ENCODE measurements at regions of chr16 and their contacts with region 1.

Region 1: GRCh38 chr16:67660564-67661028 is at the start of gene PARD6A:
- DNase-seq: peak; percentile 94 to 97 (median 97)
- H3K4me3 ChIP-seq: peak within 1 kb of the TSS; percentile 90
- H3K27ac ChIP-seq: peak within 1 kb of the TSS; percentile 82 to 88
- H3K4me1 ChIP-seq: peaks cover 5% of the 10 kb centered on the region
- H3K27me3 ChIP-seq: no peaks in the 10 kb centered on the region
- CTCF ChIP-seq: no peak
- EP300 ChIP-seq: peak; percentile 81
- POLR2A ChIP-seq: no peak
- total RNA-seq, gene PARD6A: 2.7 to 12.9 (median 5.1) TPM

Region 2: GRCh38 chr16:67226804-67227557 is 433.6 kb before region 1 on chr16 and contains the start of gene TMEM208:
- intact Hi-C with region 1: loop called in 1 of 4 experiments (anchors 5 kb)
- DNase-seq: peak; percentile 96 to 98 (median 98)
- H3K4me3 ChIP-seq: peak within 1 kb of the TSS; percentile 92
- H3K27ac ChIP-seq: peak within 1 kb of the TSS; percentile 30 to 76
- H3K4me1 ChIP-seq: peaks cover 10% of the 10 kb centered on the region
- H3K27me3 ChIP-seq: no peaks in the 10 kb centered on the region
- CTCF ChIP-seq: peak in 1 of 3 donors; percentile 34
- EP300 ChIP-seq: peak; percentile 43
- POLR2A ChIP-seq: peak; percentile 88
- total RNA-seq, gene TMEM208: 23.8 to 39.2 (median 32.1) TPM

Region 3: DNA sequence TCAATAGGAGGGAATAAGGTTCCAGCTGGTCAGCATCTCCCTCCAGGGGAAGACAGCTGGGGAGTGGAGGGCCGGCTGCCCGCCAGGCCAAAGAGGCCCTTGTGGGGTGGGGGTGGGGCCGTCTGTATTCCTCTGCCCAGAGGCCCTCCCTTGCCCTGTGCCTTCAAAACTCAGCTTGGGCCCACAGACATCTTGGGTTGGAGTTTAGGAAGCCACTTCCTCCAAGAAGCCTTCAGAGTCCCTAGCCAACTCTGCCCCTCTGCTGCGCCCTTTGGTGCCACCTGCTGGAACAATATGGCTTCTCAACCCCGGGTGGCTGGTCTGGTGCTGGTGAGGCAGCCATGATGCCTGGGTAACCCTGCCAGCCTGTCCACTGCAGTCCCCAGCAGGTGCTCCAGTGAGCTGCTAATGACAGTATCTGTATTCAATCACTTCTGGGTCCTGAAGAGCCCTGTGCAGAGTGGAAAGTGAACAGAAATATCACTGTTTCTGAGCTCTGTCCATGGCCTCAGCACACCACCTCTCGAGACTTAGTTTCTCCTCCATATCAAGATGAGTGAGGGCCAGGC is 213.0 kb before region 1 on chr16:
- intact Hi-C with region 1: no loop called
- DNase-seq: peak; percentile 71 to 82 (median 77)
- H3K4me3 ChIP-seq: no peak overlapping the region
- H3K27ac ChIP-seq: peak overlapping the region; percentile 48 to 66
- H3K4me1 ChIP-seq: peaks cover 71% of the 10 kb centered on the region
- H3K27me3 ChIP-seq: no peaks in the 10 kb centered on the region
- CTCF ChIP-seq: peak in 1 of 3 donors; percentile 29
- EP300 ChIP-seq: no peak
- POLR2A ChIP-seq: no peak

Region 4: GRCh38 chr16:67595033-67595355 is 65.6 kb before region 1 on chr16:
- intact Hi-C with region 1: no loop called
- DNase-seq: peak in 1 of 5 donors; percentile 15
- H3K4me3 ChIP-seq: no peak overlapping the region
- H3K27ac ChIP-seq: no peak overlapping the region
- H3K4me1 ChIP-seq: peaks cover 2% of the 10 kb centered on the region
- H3K27me3 ChIP-seq: no peaks in the 10 kb centered on the region
- CTCF ChIP-seq: no peak
- EP300 ChIP-seq: no peak
- POLR2A ChIP-seq: no peak

Region 5: GRCh38 chr16:67641779-67642708 is 18.6 kb before region 1 on chr16:
- intact Hi-C with region 1: no loop called
- DNase-seq: peak in 1 of 5 donors; percentile 43
- H3K4me3 ChIP-seq: no peak overlapping the region
- H3K27ac ChIP-seq: no peak overlapping the region
- H3K4me1 ChIP-seq: no peaks in the 10 kb centered on the region
- H3K27me3 ChIP-seq: no peaks in the 10 kb centered on the region
- CTCF ChIP-seq: no peak
- EP300 ChIP-seq: no peak
- POLR2A ChIP-seq: no peak

Region 6: GRCh38 chr16:67685388-67686112 is 25.0 kb after region 1 on chr16:
- intact Hi-C with region 1: no loop called
- DNase-seq: no peak
- H3K4me3 ChIP-seq: no peak overlapping the region
- H3K27ac ChIP-seq: no peak overlapping the region
- H3K4me1 ChIP-seq: no peaks in the 10 kb centered on the region
- H3K27me3 ChIP-seq: no peaks in the 10 kb centered on the region
- CTCF ChIP-seq: no peak
- EP300 ChIP-seq: no peak
- POLR2A ChIP-seq: no peak

Measured in ovary (tissue), 10 donors.